ENCODE measurements at regions of chr11 and their contacts with region 1.

Region 1: DNA sequence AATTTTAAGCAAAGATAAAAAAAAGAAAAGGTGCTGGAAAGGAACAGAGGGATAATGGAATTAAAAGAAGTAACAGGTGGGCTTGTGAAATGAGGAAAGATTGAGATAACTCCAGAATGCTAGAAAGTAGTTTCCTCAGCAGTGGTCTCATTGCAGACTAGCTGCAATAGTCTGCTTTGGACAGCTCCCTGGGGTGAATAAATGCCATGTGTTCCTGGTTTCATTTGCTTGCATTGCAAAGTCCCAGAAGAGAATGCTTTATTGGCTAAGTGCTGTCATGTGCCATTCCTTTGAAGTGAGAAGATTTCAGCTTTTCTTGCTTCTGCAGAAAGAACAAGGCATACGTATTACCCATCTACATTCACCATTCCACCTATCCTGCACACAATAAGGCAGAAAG is 478.8 kb upstream of the RAG2 start:
- DNase-seq: no peak
- ATAC-seq: no peak
- H3K4me3 ChIP-seq: no peak overlapping the region
- H3K27ac ChIP-seq: no peak overlapping the region
- H3K4me1 ChIP-seq: no peaks in the 10 kb centered on the region
- H3K27me3 ChIP-seq: no peaks in the 10 kb centered on the region
- CTCF ChIP-seq: no peak

Region 2: GRCh38 chr11:37134637-37135036 is 57.8 kb after region 1 on chr11:
- CTCF ChIA-PET with region 1: no interaction called
- POLR2A ChIA-PET with region 1: no interaction called
- in situ Hi-C with region 1: no loop called
- intact Hi-C with region 1: loop called (anchors 10 kb)
- DNase-seq: no peak
- ATAC-seq: no peak
- H3K4me3 ChIP-seq: no peak overlapping the region
- H3K27ac ChIP-seq: no peak overlapping the region
- H3K4me1 ChIP-seq: no peaks in the 10 kb centered on the region
- H3K27me3 ChIP-seq: no peaks in the 10 kb centered on the region
- CTCF ChIP-seq: no peak

Measured in Panc1 (cell line).